AG04449 (cell line): ENCODE measurements at regions of chr12 and their contacts with region 1.

Region 1: DNA sequence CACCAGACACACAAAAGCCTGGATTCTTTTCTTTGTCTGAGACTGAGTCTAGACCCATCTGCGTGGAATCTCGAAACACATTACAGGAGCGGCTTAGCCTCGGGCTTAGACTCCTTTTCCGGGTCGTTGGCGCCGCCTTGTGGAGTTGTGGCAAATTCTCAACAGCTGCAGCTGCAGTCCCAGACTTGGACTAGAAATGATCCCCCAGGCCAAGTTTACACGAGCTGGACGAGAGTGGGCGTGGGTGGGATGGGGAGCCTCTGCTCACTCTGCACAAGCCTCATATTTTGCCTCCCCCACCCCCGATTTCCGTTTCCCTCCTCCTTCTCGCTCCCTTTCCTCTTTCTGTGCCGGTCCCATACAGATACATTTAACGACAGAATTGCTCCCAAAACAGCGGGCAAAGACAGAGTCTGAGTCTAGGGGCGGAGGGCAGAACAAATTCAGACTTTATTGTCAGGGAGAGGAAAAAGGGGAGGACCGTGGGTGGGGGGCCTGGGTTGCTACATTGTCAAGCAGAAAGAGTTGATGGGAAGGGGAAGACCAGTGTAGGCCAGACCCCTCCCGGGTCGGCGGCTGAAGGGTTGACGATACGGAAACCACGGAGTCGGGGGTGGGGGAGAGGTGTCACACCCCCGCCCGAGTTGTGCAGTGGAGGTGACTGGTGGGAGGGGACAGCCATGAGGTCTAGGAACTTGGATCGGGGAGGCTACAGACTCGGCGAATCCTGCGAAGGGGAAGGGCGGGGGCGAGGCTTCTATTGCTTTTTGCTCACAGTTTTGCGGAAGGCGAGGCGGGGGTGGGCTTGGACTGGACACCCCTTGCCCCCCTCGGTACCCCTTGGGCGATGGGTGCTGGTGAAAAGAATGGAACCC is 4.7 kb upstream of the GPR84 start:
- DNase-seq: peak; percentile 34
- H3K4me3 ChIP-seq: no peak overlapping the region
- CTCF ChIP-seq: peak; percentile 85

Region 2: DNA sequence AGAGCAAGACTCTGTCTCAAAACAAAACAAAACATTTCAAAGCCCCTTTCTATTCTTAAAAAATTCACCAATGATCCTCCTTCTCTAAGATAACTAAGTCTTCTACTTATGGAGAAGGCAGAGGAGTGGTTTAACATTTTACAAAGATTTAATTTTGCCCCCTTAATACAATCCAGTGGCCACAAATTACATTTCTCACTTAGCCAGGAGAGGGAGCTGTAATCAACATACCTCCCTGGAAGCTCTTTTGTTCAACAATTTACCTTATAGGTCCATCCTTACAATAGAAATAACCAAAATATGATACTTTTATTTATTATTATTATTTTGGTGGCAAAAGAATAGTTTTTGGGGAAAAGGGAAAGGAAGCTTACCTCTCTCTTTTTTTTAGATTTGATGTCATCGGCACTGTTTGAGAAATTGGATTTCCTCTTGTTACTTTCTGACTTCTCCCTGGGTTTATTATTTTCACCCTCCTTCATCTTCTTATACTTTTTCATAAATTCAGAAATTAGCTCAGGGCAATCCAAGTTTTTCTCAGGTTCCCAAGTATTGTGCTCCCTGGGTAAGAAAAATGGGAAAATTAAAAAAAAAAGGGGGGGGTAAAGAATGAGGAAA is 117.2 kb before region 1 on chr12:
- CTCF ChIA-PET with region 1: interaction called, 46 read pairs
- POLR2A ChIA-PET with region 1: interaction called, 3 read pairs
- DNase-seq: no peak
- H3K4me3 ChIP-seq: no peak overlapping the region
- CTCF ChIP-seq: peak; percentile 42

Region 3: DNA sequence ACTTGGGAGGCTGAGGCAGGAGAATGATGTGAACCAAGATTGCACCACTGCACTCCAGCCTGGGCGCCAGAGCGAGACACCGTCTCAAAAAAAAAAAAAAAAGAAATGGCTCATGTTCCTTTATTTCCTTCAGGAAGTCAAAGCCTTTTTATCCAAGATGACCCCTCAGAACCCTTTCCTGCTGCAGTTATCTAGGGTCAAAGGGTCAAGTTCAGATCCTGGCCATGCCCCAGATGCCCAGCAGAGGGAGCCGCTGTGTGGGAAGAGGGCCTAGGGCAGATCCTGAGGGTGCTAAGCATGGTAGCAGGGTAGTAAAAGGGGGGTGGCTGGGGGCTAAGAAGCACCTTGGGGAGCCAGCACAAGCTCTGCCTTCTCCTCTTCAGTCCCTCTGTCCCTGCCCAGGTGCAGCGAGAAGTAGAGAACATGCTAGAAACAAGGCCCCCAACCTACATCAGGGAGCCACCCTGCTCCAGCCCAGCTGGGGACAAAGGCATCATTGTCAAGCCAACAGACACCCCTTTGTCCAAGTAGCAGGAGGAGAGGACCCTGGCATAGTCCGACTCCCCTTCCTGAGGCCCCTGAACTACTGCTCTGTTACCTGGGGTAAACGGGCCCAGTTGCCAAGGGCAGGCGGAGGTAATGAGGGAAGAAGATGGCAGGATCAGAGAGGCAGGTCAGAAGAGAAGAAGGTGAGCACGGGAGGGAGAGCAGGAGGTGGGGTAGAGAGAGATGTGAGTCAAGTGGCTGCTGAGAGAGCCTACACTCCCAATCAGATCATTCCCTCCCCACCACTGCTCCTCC is 74.6 kb before region 1 on chr12:
- CTCF ChIA-PET with region 1: interaction called, 131 read pairs
- POLR2A ChIA-PET with region 1: interaction called, 3 read pairs
- DNase-seq: no peak
- H3K4me3 ChIP-seq: no peak overlapping the region
- CTCF ChIP-seq: peak; percentile 87

Region 4: GRCh38 chr12:54352022-54352531 is 16.9 kb before region 1 on chr12:
- CTCF ChIA-PET with region 1: interaction called, 41 read pairs
- POLR2A ChIA-PET with region 1: no interaction called
- DNase-seq: no peak
- H3K4me3 ChIP-seq: no peak overlapping the region; the same call in 1 of the 2 replicates
- CTCF ChIP-seq: no peak

Region 5: DNA sequence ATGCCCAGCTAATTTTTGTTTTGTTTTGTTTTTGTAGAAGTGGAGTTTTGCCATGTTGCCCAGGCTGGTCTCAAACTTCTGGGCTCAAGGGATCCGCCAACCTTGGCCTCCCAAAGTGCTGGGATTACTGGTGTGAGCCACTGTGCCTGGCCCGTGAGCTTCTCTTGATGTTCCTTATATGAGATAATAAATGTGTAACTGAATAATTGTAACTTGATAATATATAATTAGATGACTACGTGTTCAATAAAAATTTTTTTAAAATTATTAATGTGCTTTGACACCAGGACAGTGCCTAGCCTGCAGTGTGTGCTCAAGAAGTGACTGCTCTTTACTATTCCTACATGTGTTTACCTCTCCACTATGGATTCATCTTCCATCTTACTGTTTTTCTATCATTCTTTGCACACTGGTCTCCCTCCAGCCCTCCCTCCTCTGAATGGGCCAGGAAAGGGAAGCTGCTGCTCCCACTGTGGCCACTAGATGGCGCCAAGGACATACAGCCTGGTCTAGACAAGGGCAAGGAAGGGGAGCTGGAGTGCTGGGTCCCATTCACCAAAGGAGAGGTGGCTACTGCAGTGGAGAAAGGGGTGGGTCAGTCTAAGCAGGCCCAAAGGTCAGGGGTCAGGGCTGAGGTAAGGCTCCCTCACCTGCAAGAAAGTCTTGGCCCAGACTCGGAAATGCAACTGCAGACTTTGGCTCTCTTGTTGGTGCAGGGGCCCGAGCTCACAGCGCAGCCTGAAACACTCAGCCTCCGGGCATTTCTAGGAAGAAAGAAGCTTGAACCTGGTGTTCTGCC is 30.2 kb after region 1 on chr12:
- CTCF ChIA-PET with region 1: interaction called, 22 read pairs
- POLR2A ChIA-PET with region 1: no interaction called
- DNase-seq: no peak
- H3K4me3 ChIP-seq: no peak overlapping the region
- CTCF ChIP-seq: peak; percentile 99

Region 6: GRCh38 chr12:54439521-54440255 is 70.7 kb after region 1 on chr12:
- CTCF ChIA-PET with region 1: interaction called, 129 read pairs
- POLR2A ChIA-PET with region 1: no interaction called
- DNase-seq: peak; percentile 71
- H3K4me3 ChIP-seq: no peak overlapping the region
- CTCF ChIP-seq: peak; percentile 68